Activated T-helper 1 cell treated with anti-CD3 and anti-CD28 coated beads, Interleukin-12 subunit alpha, Interleukin-12 subunit beta, Interleukin-2, Interleukin-4 antibody, amounts not matched to agents 30 ng/mL and 10 ng/mL and 1 ng/mL, durations not matched to agents 14 hours and 24 hours and 36 hours (primary cell): ENCODE measurements at regions of chr1 and their contacts with region 1.

Region 1: DNA sequence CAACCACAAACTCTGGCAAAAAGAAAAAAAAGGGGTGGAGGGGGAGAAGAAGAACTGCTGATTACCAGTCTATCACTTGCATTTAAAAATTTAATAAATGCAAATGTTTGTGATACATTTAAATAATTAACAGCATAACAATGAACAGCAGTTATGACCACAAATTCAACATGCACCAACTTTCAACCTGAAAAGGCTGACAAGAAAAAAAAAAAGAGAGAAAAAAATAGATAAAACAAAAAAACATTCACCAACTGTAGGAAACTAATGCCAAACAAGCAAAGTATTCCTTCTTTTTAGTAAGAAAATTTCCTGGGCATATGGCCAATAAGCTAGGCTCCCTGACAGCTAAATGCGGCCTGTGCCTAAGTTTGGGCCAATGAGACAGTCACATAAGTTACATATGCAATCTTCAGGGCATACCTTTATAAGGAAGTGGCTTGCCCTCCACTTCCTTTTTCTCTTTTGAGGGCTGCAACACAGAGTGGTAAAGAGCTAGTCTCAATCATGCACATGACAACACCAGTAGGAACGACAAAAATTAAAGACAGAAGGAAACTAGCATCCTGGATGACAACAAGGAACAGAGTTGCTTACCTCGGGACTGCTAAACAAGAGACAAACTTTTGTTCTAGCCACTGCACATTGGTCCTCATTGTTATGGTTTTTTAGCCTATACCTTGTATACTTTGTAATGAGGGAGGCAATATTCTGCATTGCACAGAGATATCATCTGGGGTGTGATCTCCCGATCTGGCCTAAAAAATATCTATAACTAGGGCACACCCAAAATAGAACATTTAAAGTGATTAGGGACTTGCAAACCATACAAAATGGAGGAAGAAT is 24.2 kb upstream of the PHTF1 start:
- DNase-seq: peak; percentile 41
- H3K4me3 Mint-ChIP-seq: peak overlapping the region; percentile 59
- H3K27ac Mint-ChIP-seq: peak overlapping the region; percentile 93
- H3K4me1 Mint-ChIP-seq: peaks cover 25% of the 10 kb centered on the region
- H3K27me3 Mint-ChIP-seq: no peaks in the 10 kb centered on the region

Region 2: DNA sequence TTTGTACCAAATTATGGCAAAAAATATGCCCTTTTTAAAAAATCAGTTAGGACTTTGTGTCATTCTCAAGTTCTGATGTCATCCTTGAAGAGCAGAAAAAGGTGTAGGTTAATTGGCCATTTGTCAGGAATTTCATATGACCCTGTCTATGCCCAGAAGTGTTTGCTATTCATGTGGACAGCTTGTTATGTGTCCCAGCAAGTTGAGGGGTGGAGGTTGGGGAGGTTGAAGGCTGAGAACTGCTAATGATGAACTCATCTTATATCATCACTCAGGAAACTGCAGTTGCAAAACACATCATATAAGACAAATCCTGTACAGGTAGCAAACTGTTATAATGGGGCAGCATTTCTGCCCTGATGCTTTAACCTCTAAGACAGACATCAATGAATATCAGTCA is 130.7 kb before region 1 on chr1:
- intact Hi-C with region 1: no loop called
- DNase-seq: no peak
- H3K4me3 Mint-ChIP-seq: no peak overlapping the region
- H3K27ac Mint-ChIP-seq: no peak overlapping the region
- H3K4me1 Mint-ChIP-seq: no peaks in the 10 kb centered on the region
- H3K27me3 Mint-ChIP-seq: no peaks in the 10 kb centered on the region

Region 3: DNA sequence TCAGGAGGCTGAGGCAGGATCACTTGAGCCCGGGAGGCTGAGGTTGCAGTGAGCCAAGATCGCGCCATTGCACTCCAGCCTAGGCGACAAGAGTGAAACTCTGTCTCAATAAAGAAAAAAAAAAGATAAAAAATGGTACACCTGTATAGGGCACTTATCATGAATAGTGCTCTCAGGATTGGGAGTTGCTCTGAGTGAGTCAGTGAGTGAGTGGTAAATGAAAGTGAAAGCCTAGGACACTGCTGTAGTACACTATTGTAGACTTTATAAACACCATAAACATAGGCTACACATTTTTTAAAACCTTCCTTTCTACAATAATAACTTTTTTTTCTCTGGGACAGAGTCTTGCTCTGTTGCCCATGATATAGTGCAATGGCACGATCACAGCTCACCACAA is 41.0 kb before region 1 on chr1:
- intact Hi-C with region 1: loop called (anchors 5 kb)
- DNase-seq: no peak
- H3K4me3 Mint-ChIP-seq: peak overlapping the region; percentile 16
- H3K27ac Mint-ChIP-seq: peak overlapping the region; percentile 14
- H3K4me1 Mint-ChIP-seq: peaks cover 21% of the 10 kb centered on the region
- H3K27me3 Mint-ChIP-seq: no peaks in the 10 kb centered on the region

Region 4: GRCh38 chr1:113802367-113803007 is 19.0 kb after region 1 on chr1:
- intact Hi-C with region 1: loop called (anchors 1 kb)
- DNase-seq: no peak
- H3K4me3 Mint-ChIP-seq: no peak overlapping the region
- H3K27ac Mint-ChIP-seq: no peak overlapping the region
- H3K4me1 Mint-ChIP-seq: peaks cover 49% of the 10 kb centered on the region
- H3K27me3 Mint-ChIP-seq: no peaks in the 10 kb centered on the region

Region 5: DNA sequence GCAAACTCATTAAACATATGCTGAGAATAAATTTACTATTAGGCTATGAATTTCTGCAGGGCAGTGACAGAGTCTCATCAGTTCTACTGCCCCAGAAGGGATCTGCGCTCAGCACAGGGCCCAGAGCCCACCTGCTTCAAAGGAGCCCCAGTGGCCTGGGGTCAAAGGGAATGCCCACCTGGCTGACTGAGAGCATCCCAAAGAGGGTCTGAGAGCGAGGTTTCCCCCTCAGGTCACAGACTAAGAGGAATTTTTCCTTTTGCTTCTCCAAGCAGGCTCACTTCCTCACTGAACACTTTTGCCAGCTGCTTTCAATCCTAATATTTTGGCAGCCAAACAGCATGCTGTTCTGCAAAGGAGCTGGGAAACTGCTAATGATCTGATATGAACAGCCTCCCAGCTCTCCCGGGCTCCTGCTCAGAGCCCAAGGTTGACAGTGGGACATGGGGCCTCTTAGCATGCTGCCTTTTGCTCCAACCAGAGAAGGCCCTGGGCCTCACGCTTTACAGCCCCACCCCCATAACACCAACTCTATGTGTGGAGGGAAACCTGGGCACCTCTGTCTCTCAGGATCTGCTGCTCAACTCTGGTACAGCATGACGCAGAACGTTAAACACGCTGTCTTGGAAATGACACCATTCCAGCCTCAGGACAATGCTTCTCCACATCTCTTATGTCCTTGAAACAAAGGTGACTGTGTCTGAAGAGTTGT is 440.9 kb after region 1 on chr1:
- intact Hi-C with region 1: no loop called
- DNase-seq: no peak
- H3K4me3 Mint-ChIP-seq: no peak overlapping the region
- H3K27ac Mint-ChIP-seq: no peak overlapping the region
- H3K4me1 Mint-ChIP-seq: no peaks in the 10 kb centered on the region
- H3K27me3 Mint-ChIP-seq: peaks cover 3% of the 10 kb centered on the region

Region 6: DNA sequence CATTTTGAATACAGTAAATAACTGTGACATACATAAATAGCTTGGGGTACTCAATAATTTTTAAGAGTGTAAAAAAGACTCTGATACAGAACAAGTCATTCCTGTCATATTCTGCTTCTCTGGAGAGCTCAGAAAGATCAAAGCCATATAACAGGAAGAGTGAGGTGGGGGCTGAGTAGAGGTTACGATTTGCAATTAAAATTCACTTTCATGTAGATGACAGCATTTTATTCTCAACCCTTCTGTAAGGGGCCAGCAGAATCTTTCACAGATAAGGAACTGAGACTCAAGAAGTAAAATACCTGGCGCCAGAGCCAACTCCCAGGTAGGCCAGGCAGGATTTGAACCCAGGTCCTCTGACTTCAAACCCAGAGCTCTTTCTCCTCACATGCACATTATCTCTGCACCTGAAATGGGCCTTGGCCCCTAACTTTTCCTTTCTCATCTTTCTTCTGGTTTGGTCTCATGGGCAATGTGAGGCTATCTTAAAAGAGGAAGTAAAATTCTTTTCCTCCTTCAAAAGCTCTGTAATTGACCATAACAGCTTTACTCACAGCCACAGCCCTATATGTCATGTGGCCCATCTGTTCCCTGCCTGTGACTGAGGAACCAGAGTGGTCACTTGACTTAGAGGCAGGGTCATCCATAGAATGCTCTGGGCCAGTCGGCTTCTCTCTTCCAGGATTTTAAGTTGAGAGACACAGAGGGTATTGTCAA is 451.1 kb after region 1 on chr1:
- intact Hi-C with region 1: no loop called
- DNase-seq: no peak
- H3K4me3 Mint-ChIP-seq: no peak overlapping the region
- H3K27ac Mint-ChIP-seq: no peak overlapping the region
- H3K4me1 Mint-ChIP-seq: no peaks in the 10 kb centered on the region
- H3K27me3 Mint-ChIP-seq: peaks cover 6% of the 10 kb centered on the region

Region 7: GRCh38 chr1:114346480-114347029 is 563.1 kb after region 1 on chr1:
- intact Hi-C with region 1: no loop called
- DNase-seq: peak; percentile 98
- H3K4me3 Mint-ChIP-seq: peak overlapping the region; percentile 93
- H3K27ac Mint-ChIP-seq: peak overlapping the region; percentile 91
- H3K4me1 Mint-ChIP-seq: peaks cover 26% of the 10 kb centered on the region
- H3K27me3 Mint-ChIP-seq: no peaks in the 10 kb centered on the region